Spleen (tissue), 13 donors: ENCODE measurements at regions of chr1 and their contacts with region 1.

Region 1: DNA sequence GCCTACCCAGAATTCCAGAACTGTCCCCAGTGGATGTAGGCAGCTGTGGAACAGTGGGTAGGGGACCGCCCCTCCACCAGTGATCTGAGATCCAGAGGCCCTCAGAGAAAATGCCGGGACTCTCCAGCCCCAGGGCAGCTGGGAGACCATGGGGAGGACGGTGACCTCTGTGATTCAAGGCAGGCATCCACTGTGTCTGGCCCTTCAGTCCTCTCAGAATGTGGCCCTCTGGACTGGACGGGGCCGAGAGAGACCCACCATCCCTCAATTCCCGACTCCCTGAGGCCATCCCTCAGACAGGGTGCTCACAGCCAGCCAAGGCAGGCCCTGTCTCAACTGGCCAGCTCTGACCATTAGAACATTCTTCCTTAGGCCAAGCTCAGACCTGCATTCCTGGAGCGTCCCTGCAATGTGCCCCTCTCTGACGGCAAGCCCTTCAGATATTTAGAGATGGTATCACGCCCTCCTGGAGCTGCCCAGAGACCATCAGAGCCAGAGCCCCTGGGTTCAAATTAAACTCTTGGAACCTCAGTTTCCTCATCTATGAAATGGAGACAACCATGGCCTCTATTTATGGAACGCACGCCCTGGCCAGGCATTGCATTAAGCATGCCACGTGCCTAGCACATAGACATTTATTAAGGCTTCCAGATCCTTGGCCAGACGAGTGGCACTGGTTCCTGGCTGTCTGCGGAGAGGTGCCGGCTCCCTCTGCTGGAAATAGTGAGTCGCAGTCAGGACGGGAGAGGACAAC is 9.6 kb upstream of the EPS8L3 start:
- DNase-seq: peak; percentile 90
- H3K4me3 ChIP-seq: no peak overlapping the region
- H3K27ac ChIP-seq: no peak overlapping the region
- H3K4me1 ChIP-seq: peaks cover 0 to 27% (median 12%) of the 10 kb centered on the region in 6 donors
- H3K27me3 ChIP-seq: peaks cover 0 to 6% (median 0%) of the 10 kb centered on the region in 7 donors
- CTCF ChIP-seq: peak; percentile 76 to 92 (median 86)
- POLR2A ChIP-seq: no peak

Region 2: GRCh38 chr1:109659997-109660690 is 113.2 kb before region 1 on chr1:
- intact Hi-C with region 1: no loop called
- DNase-seq: no peak
- H3K4me3 ChIP-seq: no peak overlapping the region
- H3K27ac ChIP-seq: peak overlapping the region in 2 of 8 donors; percentile 35 to 48
- H3K4me1 ChIP-seq: peaks cover 0 to 39% (median 22%) of the 10 kb centered on the region in 6 donors
- H3K27me3 ChIP-seq: no peaks in the 10 kb centered on the region
- CTCF ChIP-seq: no peak
- POLR2A ChIP-seq: no peak

Region 3: DNA sequence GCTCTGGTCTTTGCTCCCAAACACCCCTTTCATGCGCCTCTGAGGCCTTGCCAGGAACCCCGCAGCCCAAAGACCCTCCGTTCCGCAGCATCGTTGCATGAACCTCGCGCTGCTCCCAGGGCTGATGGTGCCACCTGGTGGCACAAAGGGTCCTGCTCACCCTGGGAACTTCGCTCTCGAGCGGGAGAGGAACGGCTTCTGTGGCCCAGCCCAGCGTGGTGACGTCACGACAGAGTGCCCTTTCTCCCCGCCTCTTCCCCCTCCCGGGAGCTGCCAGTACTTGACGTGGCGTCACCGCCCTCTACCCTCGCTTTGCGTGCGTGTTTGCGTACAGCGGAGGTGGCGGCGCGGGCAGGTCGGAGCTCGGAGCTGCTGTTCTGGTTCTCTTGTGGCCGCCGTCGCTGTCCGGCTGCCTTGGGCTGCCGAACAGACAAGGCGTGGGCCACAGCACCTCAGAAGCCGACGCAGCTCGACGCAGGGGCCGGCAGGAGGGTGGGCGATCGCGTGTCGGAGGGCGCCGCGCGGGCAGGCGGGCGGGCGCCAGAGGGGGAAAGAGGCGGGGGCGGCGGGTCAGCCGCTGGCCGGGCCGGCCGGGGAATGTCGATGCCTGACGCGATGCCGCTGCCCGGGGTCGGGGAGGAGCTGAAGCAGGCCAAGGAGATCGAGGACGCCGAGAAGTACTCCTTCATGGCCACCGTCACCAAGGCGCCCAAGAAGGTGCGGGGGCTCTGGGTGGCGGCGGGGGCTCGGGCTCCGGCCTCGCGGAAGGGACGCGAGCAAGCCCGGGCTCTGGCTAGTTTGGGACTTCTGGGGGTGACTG is 211.3 kb after region 1 on chr1 and contains the start of gene AHCYL1:
- intact Hi-C with region 1: loop called (anchors 2 kb)
- DNase-seq: peak; percentile 100
- H3K4me3 ChIP-seq: peak within 1 kb of the TSS; percentile 61 to 78 (median 68)
- H3K27ac ChIP-seq: peak within 1 kb of the TSS; percentile 91 to 96 (median 95)
- H3K4me1 ChIP-seq: peaks cover 19 to 71% (median 52%) of the 10 kb centered on the region in 6 donors
- H3K27me3 ChIP-seq: no peaks in the 10 kb centered on the region
- CTCF ChIP-seq: peak; percentile 98 to 100 (median 100)
- POLR2A ChIP-seq: peak; percentile 48 to 94 (median 87)
- total RNA-seq, gene AHCYL1: 47.1 to 65.3 (median 52.7) TPM